ENCODE measurements at regions of chr7 and their contacts with region 1.

Region 1: GRCh38 chr7:85023045-85023712 is 163.7 kb downstream of the SEMA3D start:
- DNase-seq: no peak
- H3K4me3 ChIP-seq: no peak overlapping the region
- CTCF ChIP-seq: peak; percentile 25

Region 2: DNA sequence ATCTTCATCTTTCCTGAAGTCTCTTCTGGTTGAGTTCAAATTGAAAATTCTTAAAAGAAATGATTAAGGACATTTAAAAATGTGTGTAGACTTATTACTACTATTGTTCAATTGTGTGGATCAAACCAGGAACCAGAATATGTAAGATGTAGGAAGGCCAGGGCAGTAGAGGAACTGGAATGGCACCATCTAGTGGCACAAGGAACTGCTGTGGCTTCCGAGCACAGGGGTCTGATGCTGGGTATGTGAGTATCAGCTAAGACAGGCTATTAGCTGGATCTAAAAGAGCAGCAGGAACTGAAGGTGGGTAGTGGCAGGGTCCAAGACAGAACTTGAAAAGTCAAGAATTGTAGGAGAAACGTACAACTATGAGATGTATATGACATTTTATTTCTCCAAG is 1075.9 kb before region 1 on chr7:
- CTCF ChIA-PET with region 1: interaction called, 27 read pairs
- POLR2A ChIA-PET with region 1: no interaction called
- DNase-seq: no peak
- H3K4me3 ChIP-seq: no peak overlapping the region
- CTCF ChIP-seq: peak; percentile 25

Region 3: DNA sequence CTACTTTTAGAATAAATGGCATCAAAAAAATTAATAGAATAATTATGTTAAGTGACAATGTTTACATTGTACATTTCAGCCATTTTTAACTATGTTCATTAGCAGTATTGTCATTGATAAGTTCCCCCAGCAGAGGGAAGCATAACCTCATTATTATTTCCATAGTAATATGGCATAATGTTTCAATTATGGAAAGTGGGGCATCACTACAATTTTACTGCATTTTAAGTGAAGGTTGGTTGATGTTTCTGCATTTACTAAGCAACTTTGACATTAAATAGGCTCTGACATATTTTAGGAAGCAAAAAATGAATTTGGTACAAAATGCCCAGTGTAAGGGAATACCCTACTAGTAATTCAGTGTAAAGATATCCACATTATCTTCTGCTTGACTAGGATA is 1046.9 kb before region 1 on chr7:
- CTCF ChIA-PET with region 1: interaction called, 72 read pairs
- POLR2A ChIA-PET with region 1: no interaction called
- DNase-seq: no peak
- H3K4me3 ChIP-seq: no peak overlapping the region
- CTCF ChIP-seq: peak; percentile 17

Region 4: GRCh38 chr7:84188786-84189405 is 834.3 kb before region 1 on chr7:
- CTCF ChIA-PET with region 1: interaction called, 12 read pairs
- POLR2A ChIA-PET with region 1: no interaction called
- DNase-seq: no peak
- H3K4me3 ChIP-seq: no peak overlapping the region
- CTCF ChIP-seq: peak; percentile 38

Region 5: DNA sequence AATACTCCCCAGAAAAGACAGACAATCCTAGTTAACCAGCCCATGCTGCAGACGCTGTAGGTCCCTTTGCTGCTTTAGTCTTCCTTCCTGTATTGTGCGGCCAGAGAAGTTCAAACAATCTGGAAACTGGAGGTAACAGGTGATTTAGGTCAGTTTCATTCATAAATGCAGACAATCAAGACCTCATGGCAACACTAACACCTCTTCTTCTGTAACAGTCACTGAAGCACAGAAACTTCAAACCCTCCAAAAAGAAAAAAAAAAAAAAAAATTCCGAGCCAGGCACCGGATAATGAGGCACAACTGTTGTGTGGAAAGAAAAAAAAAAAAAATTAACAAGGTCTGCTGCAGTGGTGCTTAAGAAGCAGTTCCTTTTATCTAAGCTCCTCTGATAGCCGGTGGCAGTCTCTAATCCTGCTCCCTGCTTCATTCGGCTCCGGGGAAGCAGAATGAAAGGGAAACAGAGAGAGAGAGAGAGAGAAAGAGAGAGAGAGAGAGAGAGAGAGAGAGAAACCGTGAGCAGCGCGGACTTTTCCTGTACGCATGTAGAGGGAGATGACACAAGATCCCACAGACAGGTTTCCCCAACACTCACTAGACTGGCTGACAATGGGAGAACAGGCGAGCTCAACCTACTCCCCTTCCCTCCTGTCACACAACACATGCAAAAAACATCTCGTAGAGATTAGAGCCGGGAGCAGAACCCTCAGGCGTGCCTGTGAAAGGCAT is 828.5 kb before region 1 on chr7 and contains the start of gene SEMA3A:
- CTCF ChIA-PET with region 1: interaction called, 12 read pairs
- POLR2A ChIA-PET with region 1: no interaction called
- DNase-seq: no peak
- H3K4me3 ChIP-seq: peak within 1 kb of the TSS; percentile 62
- CTCF ChIP-seq: no peak

Region 6: DNA sequence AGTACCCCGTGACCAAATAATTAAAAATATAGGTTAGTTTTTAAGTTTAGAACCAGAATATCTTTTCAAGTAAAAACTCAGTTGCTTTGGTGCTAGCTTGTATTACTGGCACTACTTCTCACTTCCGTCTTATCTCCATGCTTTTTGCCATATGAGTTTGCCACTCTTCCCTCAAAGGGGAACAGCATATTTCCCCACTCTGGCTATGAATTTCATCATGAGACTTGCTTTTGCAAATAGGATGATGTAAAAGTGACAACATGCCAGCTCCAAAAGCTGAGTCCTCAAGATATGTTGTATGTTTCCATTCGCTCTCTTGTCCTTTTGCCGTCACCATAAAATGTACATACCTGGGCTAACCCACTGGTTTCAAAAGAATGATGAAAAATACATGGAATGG is 650.5 kb before region 1 on chr7:
- CTCF ChIA-PET with region 1: no interaction called
- POLR2A ChIA-PET with region 1: no interaction called
- DNase-seq: no peak
- H3K4me3 ChIP-seq: no peak overlapping the region
- CTCF ChIP-seq: no peak

Region 7: GRCh38 chr7:84975586-84976185 is 47.5 kb before region 1 on chr7:
- CTCF ChIA-PET with region 1: no interaction called
- POLR2A ChIA-PET with region 1: no interaction called
- DNase-seq: no peak
- H3K4me3 ChIP-seq: no peak overlapping the region
- CTCF ChIP-seq: no peak

Region 8: GRCh38 chr7:85125651-85126131 is 102.5 kb after region 1 on chr7:
- CTCF ChIA-PET with region 1: no interaction called
- POLR2A ChIA-PET with region 1: no interaction called
- DNase-seq: no peak
- H3K4me3 ChIP-seq: no peak overlapping the region
- CTCF ChIP-seq: no peak

Region 9: GRCh38 chr7:85150624-85151023 is 127.4 kb after region 1 on chr7:
- CTCF ChIA-PET with region 1: no interaction called
- POLR2A ChIA-PET with region 1: no interaction called
- DNase-seq: no peak
- H3K4me3 ChIP-seq: no peak overlapping the region
- CTCF ChIP-seq: no peak